BJ (cell line): ENCODE measurements at regions of chr6 and their contacts with region 1.

Region 1: DNA sequence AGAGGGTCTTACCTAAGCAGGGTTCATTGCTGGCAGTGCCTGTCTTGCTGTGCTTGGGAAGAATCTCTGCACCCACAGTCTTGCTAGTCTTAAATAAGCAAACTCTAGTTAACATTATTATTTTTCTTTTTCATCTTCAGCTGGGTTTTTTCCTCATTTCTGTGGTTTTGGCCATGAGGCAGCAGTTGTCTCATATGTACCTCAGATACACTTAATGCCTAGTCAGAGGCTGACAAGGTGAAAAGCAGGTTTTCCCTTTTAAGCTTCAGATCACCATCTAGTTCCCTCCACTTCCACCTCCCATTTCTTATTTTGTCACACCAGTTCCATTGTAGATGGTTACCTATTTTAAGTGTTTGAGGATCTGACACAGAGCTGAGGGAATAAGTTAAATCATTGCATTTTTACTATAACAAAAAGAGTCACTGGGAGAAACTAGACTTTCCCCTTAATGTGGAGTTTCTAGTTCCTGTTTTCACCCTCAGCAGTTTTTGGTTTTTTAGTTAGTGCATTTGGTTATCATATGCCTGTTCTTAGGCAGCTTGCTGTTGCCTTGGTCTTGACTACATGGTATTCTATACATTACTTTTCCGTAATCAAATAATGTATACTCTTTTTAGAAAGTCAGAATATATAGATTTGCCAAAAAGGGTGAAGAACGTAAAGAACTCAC is 46.0 kb downstream of the AFDN start:
- DNase-seq: no peak
- H3K4me3 ChIP-seq: no peak overlapping the region
- H3K27me3 ChIP-seq: no peaks in the 10 kb centered on the region
- CTCF ChIP-seq: no peak

Region 2: GRCh38 chr6:169112483-169113320 is 1240.0 kb after region 1 on chr6:
- CTCF ChIA-PET with region 1: no interaction called
- POLR2A ChIA-PET with region 1: interaction called, 13 read pairs
- DNase-seq: no peak
- H3K4me3 ChIP-seq: no peak overlapping the region
- H3K27me3 ChIP-seq: no peaks in the 10 kb centered on the region
- CTCF ChIP-seq: no peak